ENCODE measurements at regions of chr22 and their contacts with region 1.

Region 1: GRCh38 chr22:19058713-19059451 is 63.3 kb downstream of the DGCR2 start:
- DNase-seq: peak in 1 of 5 donors; percentile 44
- ATAC-seq: no peak
- H3K4me3 ChIP-seq: no peak overlapping the region
- H3K27ac ChIP-seq: no peak overlapping the region
- H3K4me1 ChIP-seq: peaks cover 0 to 10% (median 3%) of the 10 kb centered on the region in 12 donors
- H3K27me3 ChIP-seq: no peaks in the 10 kb centered on the region
- CTCF ChIP-seq: no peak
- POLR2A ChIP-seq: no peak

Region 2: GRCh38 chr22:18947905-18948304 is 111.0 kb before region 1 on chr22:
- intact Hi-C with region 1: no loop called
- DNase-seq: peak in 3 of 5 donors; percentile 1 to 14 (median 2)
- ATAC-seq: no peak
- H3K4me3 ChIP-seq: no peak overlapping the region
- H3K27ac ChIP-seq: no peak overlapping the region
- H3K4me1 ChIP-seq: no peaks in the 10 kb centered on the region
- H3K27me3 ChIP-seq: peaks cover 0 to 20% (median 0%) of the 10 kb centered on the region in 9 donors
- CTCF ChIP-seq: no peak
- POLR2A ChIP-seq: no peak

Region 3: GRCh38 chr22:19016081-19016766 is 42.7 kb before region 1 on chr22:
- intact Hi-C with region 1: no loop called
- DNase-seq: no peak
- ATAC-seq: no peak
- H3K4me3 ChIP-seq: no peak overlapping the region
- H3K27ac ChIP-seq: no peak overlapping the region
- H3K4me1 ChIP-seq: no peaks in the 10 kb centered on the region
- H3K27me3 ChIP-seq: peaks cover 0 to 21% (median 5%) of the 10 kb centered on the region in 9 donors
- CTCF ChIP-seq: no peak
- POLR2A ChIP-seq: no peak

Region 4: GRCh38 chr22:19035474-19036228 is 23.2 kb before region 1 on chr22:
- intact Hi-C with region 1: no loop called
- DNase-seq: peak in 1 of 5 donors; percentile 22
- ATAC-seq: peak in 3 of 4 donors; percentile 8 to 35 (median 21)
- H3K4me3 ChIP-seq: no peak overlapping the region
- H3K27ac ChIP-seq: no peak overlapping the region
- H3K4me1 ChIP-seq: peaks cover 0 to 6% (median 0%) of the 10 kb centered on the region in 12 donors
- H3K27me3 ChIP-seq: peaks cover 0 to 3% (median under 1%) of the 10 kb centered on the region in 9 donors
- CTCF ChIP-seq: peak in 1 of 12 donors; percentile 10
- POLR2A ChIP-seq: no peak

Region 5: GRCh38 chr22:19109198-19110067 is 50.6 kb after region 1 on chr22:
- intact Hi-C with region 1: loop called in 1 of 10 experiments (anchors 10 kb)
- DNase-seq: no peak
- ATAC-seq: peak; percentile 8 to 75 (median 66)
- H3K4me3 ChIP-seq: peak overlapping the region in 1 of 12 donors; percentile 40
- H3K27ac ChIP-seq: peak overlapping the region in 1 of 12 donors; percentile 86
- H3K4me1 ChIP-seq: peaks cover 10 to 68% (median 46%) of the 10 kb centered on the region in 12 donors
- H3K27me3 ChIP-seq: no peaks in the 10 kb centered on the region
- CTCF ChIP-seq: no peak
- POLR2A ChIP-seq: no peak

Region 6: GRCh38 chr22:19387038-19387437 is 328.2 kb after region 1 on chr22:
- intact Hi-C with region 1: no loop called
- DNase-seq: no peak
- ATAC-seq: no peak
- H3K4me3 ChIP-seq: no peak overlapping the region
- H3K27ac ChIP-seq: no peak overlapping the region
- H3K4me1 ChIP-seq: peaks cover 0 to 6% (median 0%) of the 10 kb centered on the region in 12 donors
- H3K27me3 ChIP-seq: no peaks in the 10 kb centered on the region
- CTCF ChIP-seq: no peak
- POLR2A ChIP-seq: no peak